Activated CD4-positive, alpha-beta T cell treated with anti-CD3 and anti-CD28 coated beads, Interleukin-2, amount 10 ng/mL, durations not matched to agents 24 days and 14 days (primary cell): ENCODE measurements at regions of chr7 and their contacts with region 1.

Region 1: DNA sequence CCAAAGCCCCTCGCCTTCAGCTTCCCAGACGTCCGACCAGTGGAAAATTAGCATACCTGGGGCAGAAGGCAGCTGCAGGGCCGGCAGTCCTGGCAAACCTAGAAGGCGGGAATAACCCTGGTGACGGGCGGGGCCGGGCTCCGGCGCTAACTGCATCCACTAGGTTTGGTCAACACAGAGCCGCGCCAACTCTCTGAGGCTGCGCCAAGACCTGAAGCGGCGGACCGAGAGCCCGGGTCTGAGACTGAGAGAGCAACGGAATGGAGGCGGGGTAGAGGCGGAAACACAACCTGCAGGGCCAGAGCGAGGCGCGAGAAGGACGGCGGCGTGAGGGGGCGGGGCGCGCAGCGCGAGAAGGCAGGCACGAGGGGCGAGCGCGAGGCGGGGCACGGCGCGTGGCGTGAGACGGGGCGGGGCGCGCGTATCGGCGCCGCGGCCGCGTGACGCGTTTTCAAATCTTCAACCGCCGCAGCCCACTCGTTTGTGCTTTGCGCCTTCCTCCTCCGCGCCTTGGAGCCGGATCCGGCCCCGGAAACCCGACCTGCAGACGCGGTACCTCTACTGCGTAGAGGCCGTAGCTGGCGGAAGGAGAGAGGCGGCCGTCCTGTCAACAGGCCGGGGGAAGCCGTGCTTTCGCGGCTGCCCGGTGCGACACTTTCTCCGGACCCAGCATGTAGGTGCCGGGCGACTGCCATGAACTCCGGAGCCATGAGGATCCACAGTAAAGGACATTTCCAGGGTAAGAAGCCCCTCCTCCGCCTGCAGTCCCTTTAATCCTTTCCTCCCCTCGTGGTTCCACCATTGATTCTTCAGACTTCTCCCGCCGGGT is at the starts of genes DBF4 and SLC25A40:
- DNase-seq: peak; percentile 99
- H3K4me3 Mint-ChIP-seq: peak within 1 kb of the TSS; percentile 88
- H3K27ac Mint-ChIP-seq: peak within 1 kb of the TSS; percentile 98
- H3K4me1 Mint-ChIP-seq: peaks cover 49% of the 10 kb centered on the region
- H3K27me3 Mint-ChIP-seq: no peaks in the 10 kb centered on the region
- total RNA-seq, gene DBF4: 65.7 and 74.8 TPM in 2 replicates
- total RNA-seq, gene SLC25A40: 43.3 and 51.0 TPM in 2 replicates

Region 2: DNA sequence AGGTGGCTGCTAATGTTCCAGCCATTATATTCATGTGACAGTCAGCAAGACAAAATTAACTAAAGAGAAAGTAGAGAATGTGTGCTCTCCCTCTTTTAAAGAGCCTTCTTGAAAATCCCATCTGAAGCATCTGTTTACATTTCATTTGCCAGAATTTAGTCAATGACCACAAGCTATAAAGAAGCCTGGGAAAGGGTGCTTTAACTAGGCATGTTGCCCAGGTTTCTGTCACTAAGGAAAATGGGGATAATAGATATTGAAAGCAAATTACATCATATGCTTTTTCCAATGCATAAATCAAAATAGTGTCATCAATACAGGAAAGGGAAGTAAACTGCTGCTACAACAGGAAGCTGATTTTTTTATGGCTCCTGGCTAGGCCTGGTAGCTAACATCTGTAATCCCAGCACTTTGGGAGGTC is 884.5 kb before region 1 on chr7:
- intact Hi-C with region 1: no loop called
- DNase-seq: no peak
- H3K4me3 Mint-ChIP-seq: no peak overlapping the region
- H3K27ac Mint-ChIP-seq: no peak overlapping the region
- H3K4me1 Mint-ChIP-seq: peaks cover 3% of the 10 kb centered on the region
- H3K27me3 Mint-ChIP-seq: peaks cover 2% of the 10 kb centered on the region

Region 3: DNA sequence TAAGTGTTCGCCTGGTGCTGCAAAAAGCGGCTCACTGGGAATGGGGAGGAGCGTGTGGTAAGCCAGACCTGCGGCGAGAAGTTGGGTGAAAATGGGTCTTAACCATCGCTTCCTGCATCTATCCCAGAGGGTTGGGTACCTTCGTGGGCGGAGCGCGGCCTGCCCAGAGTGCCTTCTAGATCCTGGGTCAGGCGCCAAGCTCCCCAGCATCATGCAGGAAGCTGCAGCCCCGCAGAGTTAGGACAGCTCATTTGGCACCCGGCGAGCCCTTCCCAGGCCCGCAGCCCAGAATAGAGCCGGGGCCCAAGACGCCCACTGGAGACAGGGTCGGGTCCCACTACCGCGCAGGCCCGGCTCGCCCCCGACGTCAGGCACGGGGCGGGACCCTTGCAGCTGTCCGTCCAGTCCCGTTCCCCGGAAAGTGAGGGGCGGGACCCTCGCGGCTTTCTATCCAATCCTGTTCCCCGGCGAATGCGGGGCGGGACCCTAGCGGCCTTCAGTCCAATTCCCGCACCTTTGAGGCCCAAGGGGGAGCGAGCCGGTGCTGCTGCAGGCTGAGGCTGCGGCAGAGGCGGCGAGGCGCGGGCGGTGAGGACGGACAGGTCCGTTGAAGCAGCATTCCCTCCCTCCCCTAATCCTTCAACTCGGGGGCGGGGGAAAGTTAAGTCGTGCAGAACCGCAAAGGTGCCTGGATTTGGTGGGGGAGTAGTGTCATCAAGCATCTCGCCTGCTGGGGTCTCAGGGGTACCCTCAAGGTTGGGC is 530.9 kb before region 1 on chr7 and contains the start of gene CROT:
- intact Hi-C with region 1: loop called (anchors 1 kb)
- DNase-seq: peak; percentile 99
- H3K4me3 Mint-ChIP-seq: peak within 1 kb of the TSS; percentile 97
- H3K27ac Mint-ChIP-seq: peak within 1 kb of the TSS; percentile 95
- H3K4me1 Mint-ChIP-seq: peaks cover 46% of the 10 kb centered on the region
- H3K27me3 Mint-ChIP-seq: no peaks in the 10 kb centered on the region
- total RNA-seq, gene CROT: 6.2 and 7.1 TPM in 2 replicates

Region 4: DNA sequence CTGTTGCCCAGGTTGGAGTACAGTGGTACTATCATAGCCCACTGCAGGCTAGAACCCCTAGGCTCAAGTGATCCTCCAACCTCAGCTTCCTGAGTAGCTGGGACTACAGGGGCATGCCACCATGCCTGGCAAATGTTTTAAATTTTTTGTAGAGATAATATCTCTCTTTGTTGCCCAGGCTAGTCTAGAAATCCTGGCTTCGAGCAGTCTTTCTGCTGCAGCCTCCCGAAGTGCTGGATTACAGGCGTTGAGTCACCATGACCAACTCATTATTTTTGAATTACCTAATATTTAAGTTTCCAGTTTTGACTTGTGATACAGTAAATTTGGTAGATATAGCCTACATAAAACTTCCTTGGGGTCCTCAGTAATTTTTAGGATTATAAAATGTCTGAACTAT is 173.9 kb before region 1 on chr7:
- intact Hi-C with region 1: no loop called
- DNase-seq: no peak
- H3K4me3 Mint-ChIP-seq: no peak overlapping the region
- H3K27ac Mint-ChIP-seq: no peak overlapping the region
- H3K4me1 Mint-ChIP-seq: no peaks in the 10 kb centered on the region
- H3K27me3 Mint-ChIP-seq: no peaks in the 10 kb centered on the region

Region 5: DNA sequence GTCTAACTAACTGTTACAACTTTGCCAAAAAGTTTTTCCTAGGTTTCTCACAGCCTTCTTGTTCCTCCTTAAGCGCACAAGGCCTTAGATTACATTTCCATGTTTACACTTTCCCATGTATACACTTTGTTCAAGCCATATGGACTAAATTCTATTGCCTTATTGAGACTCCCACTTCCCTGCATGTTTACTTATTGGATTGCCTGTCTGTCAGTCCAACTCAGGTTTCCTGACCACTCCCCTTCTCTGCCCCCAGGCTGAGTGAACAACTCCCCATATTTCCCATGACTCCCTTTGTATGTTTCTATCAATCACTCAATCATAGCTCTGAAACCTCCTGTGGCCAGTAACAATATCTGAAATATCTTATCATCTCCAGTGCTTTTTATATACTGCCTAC is 43.1 kb before region 1 on chr7:
- intact Hi-C with region 1: loop called (anchors 5 kb)
- DNase-seq: no peak
- H3K4me3 Mint-ChIP-seq: no peak overlapping the region
- H3K27ac Mint-ChIP-seq: no peak overlapping the region
- H3K4me1 Mint-ChIP-seq: no peaks in the 10 kb centered on the region
- H3K27me3 Mint-ChIP-seq: no peaks in the 10 kb centered on the region

Region 6: DNA sequence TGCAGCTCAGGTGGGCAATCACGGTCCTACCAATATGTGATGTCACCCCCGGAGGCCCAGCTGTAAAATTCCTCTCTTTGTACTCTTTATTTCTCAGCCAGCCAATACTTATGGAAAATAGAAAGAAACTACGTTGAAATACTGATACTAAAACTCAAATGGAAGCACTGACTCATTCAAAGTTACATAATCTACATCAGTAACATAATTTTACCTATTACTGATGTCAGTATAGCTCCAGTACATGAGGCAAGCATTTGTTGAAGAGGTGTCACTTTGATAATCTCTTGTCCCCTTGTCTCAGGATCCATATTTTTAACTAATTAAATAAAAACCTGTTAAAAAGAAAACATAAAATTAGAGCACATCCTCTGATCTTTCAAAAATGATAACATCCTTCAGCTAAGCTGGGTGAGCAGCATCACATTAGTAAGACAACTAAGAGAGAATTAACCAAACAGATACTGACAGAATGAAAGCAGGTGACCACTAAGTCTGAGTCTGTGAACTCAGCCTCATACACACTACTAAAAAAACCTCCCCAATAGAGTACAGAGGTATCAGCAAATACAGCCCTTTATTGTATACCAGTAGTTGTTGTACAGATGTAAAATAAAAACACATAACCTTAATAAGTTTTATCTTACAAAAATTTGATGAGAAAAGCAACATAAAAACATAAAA is 17.7 kb before region 1 on chr7:
- intact Hi-C with region 1: loop called (anchors 2 kb)
- DNase-seq: no peak
- H3K4me3 Mint-ChIP-seq: no peak overlapping the region
- H3K27ac Mint-ChIP-seq: peak overlapping the region; percentile 75
- H3K4me1 Mint-ChIP-seq: peaks cover 15% of the 10 kb centered on the region
- H3K27me3 Mint-ChIP-seq: no peaks in the 10 kb centered on the region

Region 7: DNA sequence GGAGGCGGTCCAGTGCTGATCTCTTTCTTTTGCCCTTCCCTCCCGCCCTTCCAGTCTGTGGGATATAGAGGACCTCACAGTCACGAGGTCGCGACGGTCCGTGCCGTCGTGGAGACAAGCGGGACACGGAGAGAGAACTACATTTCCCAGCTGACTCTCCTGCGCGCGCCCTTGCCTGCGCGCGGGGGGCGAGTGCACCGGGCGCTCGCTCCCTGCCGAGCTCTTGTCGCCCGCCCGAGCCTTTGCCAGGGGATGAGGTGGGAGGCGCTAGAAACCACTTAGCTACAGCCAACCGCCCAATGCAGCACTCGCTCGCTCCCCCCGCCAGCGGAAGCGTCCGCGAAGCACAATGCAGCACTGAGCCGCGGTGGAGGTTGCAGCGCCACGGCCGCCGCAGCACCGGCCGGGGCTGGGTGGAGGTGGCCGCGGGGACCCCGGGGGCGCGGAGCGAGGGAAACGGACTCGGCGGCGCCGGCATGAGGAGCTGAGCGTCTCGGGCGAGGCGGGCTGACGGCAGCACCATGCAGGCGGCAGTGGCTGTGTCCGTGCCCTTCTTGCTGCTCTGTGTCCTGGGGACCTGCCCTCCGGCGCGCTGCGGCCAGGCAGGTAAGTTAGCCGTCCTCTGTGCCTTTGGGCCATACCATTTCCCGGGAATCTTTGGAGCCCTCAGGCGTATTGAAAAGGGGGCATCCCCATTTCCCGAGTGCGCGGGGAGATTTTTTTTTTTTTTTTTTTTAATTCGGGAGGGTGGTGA is 57.9 kb after region 1 on chr7 and contains the start of gene ADAM22:
- intact Hi-C with region 1: loop called (anchors 1 kb)
- DNase-seq: peak; percentile 91
- H3K4me3 Mint-ChIP-seq: peak within 1 kb of the TSS; percentile 90
- H3K27ac Mint-ChIP-seq: peak within 1 kb of the TSS; percentile 57
- H3K4me1 Mint-ChIP-seq: peaks cover 9% of the 10 kb centered on the region
- H3K27me3 Mint-ChIP-seq: peaks cover 50% of the 10 kb centered on the region
- total RNA-seq, gene ADAM22: 1.5 and 1.7 TPM in 2 replicates

Region 8: GRCh38 chr7:87944531-87944930 is 68.3 kb after region 1 on chr7:
- intact Hi-C with region 1: no loop called
- DNase-seq: no peak
- H3K4me3 Mint-ChIP-seq: no peak overlapping the region
- H3K27ac Mint-ChIP-seq: no peak overlapping the region
- H3K4me1 Mint-ChIP-seq: no peaks in the 10 kb centered on the region
- H3K27me3 Mint-ChIP-seq: peaks cover 2% of the 10 kb centered on the region

Region 9: GRCh38 chr7:87966271-87966670 is 90.0 kb after region 1 on chr7:
- intact Hi-C with region 1: no loop called
- DNase-seq: no peak
- H3K4me3 Mint-ChIP-seq: no peak overlapping the region
- H3K27ac Mint-ChIP-seq: no peak overlapping the region
- H3K4me1 Mint-ChIP-seq: no peaks in the 10 kb centered on the region
- H3K27me3 Mint-ChIP-seq: no peaks in the 10 kb centered on the region